Tibial artery (tissue), 4 donors: ENCODE measurements at regions of chr7 and their contacts with region 1.

Region 1: GRCh38 chr7:77798394-77799077 is at the starts of genes PHTF2 and TMEM60:
- DNase-seq: peak; percentile 99 to 100
- H3K4me3 ChIP-seq: peak within 1 kb of the TSS; percentile 89 to 97
- H3K27ac ChIP-seq: peak within 1 kb of the TSS; percentile 92 to 93
- H3K4me1 ChIP-seq: peaks cover 0 to 38% (median 21%) of the 10 kb centered on the region in 4 donors
- H3K27me3 ChIP-seq: no peaks in the 10 kb centered on the region
- CTCF ChIP-seq: peak; percentile 52 to 57

Region 2: DNA sequence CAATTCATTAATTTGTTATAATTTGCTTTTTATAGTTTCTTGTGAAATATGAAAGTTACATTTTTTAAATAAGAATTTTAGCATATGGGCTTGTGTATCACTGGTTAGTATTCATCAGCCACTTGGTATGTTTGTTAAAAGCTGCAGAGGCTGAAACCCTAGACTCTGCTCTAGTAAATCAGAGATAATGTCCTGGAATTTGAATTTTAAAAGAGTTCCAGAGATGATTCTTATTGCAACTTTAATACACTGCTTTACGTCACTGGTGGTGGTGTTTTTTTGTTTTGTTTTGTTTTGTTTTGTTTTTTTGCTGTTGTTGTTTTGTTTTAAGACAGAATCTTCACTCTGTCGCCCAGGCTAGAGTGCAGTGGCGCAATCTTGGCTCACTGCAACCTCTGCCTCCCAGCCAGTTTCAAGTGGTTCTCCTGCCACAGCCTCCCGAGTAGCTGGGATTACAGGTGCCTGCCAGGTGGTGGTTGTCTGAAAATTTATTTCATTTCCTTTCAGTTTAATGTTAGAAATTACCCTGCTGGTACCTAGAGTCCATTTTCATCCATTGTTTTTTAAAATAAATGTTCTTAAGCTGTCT is 217.7 kb before region 1 on chr7:
- intact Hi-C with region 1: no loop called
- DNase-seq: no peak
- H3K4me3 ChIP-seq: no peak overlapping the region
- H3K27ac ChIP-seq: no peak overlapping the region
- H3K4me1 ChIP-seq: peaks cover 0 to 15% (median 0%) of the 10 kb centered on the region in 4 donors
- H3K27me3 ChIP-seq: no peaks in the 10 kb centered on the region
- CTCF ChIP-seq: no peak

Region 3: GRCh38 chr7:77696198-77697028 is 102.1 kb before region 1 on chr7 and contains the start of gene RSBN1L:
- intact Hi-C with region 1: loop called (anchors 2 kb)
- DNase-seq: peak; percentile 99
- H3K4me3 ChIP-seq: peak within 1 kb of the TSS; percentile 94 to 98
- H3K27ac ChIP-seq: peak within 1 kb of the TSS; percentile 92 to 98
- H3K4me1 ChIP-seq: peaks cover 0 to 65% (median 30%) of the 10 kb centered on the region in 4 donors
- H3K27me3 ChIP-seq: no peaks in the 10 kb centered on the region
- CTCF ChIP-seq: peak; percentile 33 to 53

Region 4: GRCh38 chr7:78019447-78020135 is 221.1 kb after region 1 on chr7:
- intact Hi-C with region 1: loop called (anchors 5 kb)
- DNase-seq: peak; percentile 95 to 97
- H3K4me3 ChIP-seq: peak overlapping the region; percentile 61 to 68
- H3K27ac ChIP-seq: peak overlapping the region; percentile 90 to 98
- H3K4me1 ChIP-seq: peaks cover 0 to 30% (median 14%) of the 10 kb centered on the region in 4 donors
- H3K27me3 ChIP-seq: no peaks in the 10 kb centered on the region
- CTCF ChIP-seq: no peak

Region 5: DNA sequence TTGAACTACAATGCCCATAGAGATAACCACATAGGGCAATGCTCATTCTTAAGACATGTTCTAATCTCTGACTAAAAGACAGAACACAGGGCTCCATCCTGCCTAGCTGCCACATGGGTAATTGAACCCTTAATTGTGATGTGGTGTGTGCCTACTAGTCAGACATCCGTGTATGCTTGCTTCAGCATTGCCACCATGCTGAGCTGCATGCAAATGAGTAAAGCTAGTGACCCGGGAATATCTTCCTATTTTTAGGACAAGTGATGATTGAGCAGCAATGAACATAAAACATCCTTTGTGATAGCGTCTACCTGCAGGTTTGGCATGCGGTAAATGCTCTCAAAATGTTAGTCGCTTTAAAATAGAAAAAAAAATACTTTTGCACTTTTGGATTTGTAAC is 1539.2 kb after region 1 on chr7:
- intact Hi-C with region 1: no loop called
- DNase-seq: no peak
- H3K4me3 ChIP-seq: no peak overlapping the region
- H3K27ac ChIP-seq: no peak overlapping the region
- H3K4me1 ChIP-seq: no peaks in the 10 kb centered on the region
- H3K27me3 ChIP-seq: no peaks in the 10 kb centered on the region
- CTCF ChIP-seq: no peak